PC-3 (cell line): ENCODE measurements at regions of chr2 and their contacts with region 1.

Region 1: GRCh38 chr2:137947728-137948336 is 16.4 kb upstream of the HNMT start:
- DNase-seq: peak; percentile 84
- ATAC-seq: peak; percentile 63
- H3K4me3 ChIP-seq: no peak overlapping the region
- H3K27ac ChIP-seq: no peak overlapping the region
- H3K4me1 ChIP-seq: peaks cover 6% of the 10 kb centered on the region
- H3K27me3 ChIP-seq: no peaks in the 10 kb centered on the region
- CTCF ChIP-seq: peak; percentile 88

Region 2: DNA sequence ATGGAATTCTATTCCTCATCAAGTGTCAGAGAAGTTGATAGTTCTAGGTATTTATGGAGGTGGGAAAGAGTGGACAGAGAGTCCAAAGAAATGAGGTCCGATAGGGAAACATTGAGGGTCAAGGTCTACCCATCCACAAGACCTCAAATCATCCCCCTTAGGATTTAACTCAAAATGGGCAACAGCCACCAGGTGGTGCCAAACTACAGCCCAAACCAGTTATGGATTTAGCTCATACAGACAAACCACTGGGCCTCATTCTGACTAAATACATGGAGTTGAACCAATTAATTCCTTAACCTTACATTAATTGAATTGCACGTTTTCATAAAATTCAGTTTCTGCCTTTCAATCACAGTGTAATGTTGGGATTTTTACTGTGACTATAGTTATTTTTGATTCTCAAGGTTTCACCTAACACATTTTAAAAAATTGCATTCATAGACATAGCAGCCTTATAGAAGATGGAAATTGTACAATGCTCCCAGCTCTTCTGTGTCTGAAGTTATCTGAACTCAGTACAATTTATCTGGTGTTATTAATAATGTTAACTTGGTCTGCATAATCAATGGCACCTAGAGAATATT is 81.8 kb before region 1 on chr2:
- CTCF ChIA-PET with region 1: no interaction called
- POLR2A ChIA-PET with region 1: no interaction called
- intact Hi-C with region 1: no loop called
- DNase-seq: peak; percentile 75
- ATAC-seq: peak; percentile 71
- H3K4me3 ChIP-seq: no peak overlapping the region
- H3K27ac ChIP-seq: no peak overlapping the region
- H3K4me1 ChIP-seq: no peaks in the 10 kb centered on the region
- H3K27me3 ChIP-seq: peaks cover 6% of the 10 kb centered on the region
- CTCF ChIP-seq: peak; percentile 80

Region 3: DNA sequence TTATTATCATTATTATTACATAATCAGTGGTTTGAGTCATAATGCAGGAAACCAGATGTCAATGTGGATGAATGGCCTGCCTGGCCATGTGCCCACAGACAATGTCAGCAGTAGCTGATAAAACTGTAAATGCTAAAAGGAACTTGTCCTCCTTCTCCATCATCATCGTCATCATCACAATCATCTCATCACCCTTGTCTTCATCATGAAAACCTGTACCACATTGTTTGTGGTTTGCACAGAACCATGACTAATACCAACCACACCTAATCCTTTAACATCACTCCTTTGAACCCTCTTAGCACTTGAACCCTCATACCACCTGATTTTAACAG is 112.4 kb after region 1 on chr2:
- CTCF ChIA-PET with region 1: no interaction called
- POLR2A ChIA-PET with region 1: no interaction called
- intact Hi-C with region 1: no loop called
- DNase-seq: peak; percentile 93
- ATAC-seq: peak; percentile 53
- H3K4me3 ChIP-seq: no peak overlapping the region
- H3K27ac ChIP-seq: peak overlapping the region; percentile 44
- H3K4me1 ChIP-seq: peaks cover 17% of the 10 kb centered on the region
- H3K27me3 ChIP-seq: no peaks in the 10 kb centered on the region
- CTCF ChIP-seq: no peak

Region 4: GRCh38 chr2:138516030-138516704 is 568.3 kb after region 1 on chr2:
- CTCF ChIA-PET with region 1: no interaction called
- POLR2A ChIA-PET with region 1: no interaction called
- intact Hi-C with region 1: loop called (anchors 10 kb)
- DNase-seq: peak; percentile 19
- ATAC-seq: no peak
- H3K4me3 ChIP-seq: no peak overlapping the region
- H3K27ac ChIP-seq: no peak overlapping the region
- H3K4me1 ChIP-seq: peaks cover 18% of the 10 kb centered on the region
- H3K27me3 ChIP-seq: no peaks in the 10 kb centered on the region
- CTCF ChIP-seq: no peak